A673 (cell line): ENCODE measurements at regions of chr7 and their contacts with region 1.

Region 1: DNA sequence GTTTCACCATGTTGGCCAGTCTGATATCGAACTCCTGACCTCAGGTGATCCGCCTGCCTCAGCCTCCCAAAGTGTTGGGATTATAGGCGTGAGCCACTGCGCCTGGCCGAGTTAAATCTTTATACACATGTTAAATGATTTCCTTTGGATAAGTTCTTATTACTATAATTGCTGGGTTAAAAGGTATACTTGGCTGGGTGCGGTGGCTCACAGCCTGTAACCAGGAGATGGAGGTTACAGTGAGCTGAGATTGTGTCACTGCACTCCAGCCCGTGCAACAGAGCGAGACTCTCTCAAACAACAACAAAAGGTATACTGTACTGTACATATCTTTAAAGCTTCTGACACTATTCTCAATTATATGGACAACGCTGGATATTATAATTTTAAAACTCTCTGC is 53.2 kb upstream of the CDK13 start:
- DNase-seq: no peak
- H3K4me3 ChIP-seq: no peak overlapping the region
- H3K27ac ChIP-seq: no peak overlapping the region
- H3K4me1 ChIP-seq: peaks cover 7% of the 10 kb centered on the region
- H3K27me3 ChIP-seq: no peaks in the 10 kb centered on the region
- CTCF ChIP-seq: no peak

Region 2: GRCh38 chr7:39979406-39980073 is 82.7 kb after region 1 on chr7:
- CTCF ChIA-PET with region 1: no interaction called
- POLR2A ChIA-PET with region 1: no interaction called
- intact Hi-C with region 1: no loop called
- DNase-seq: no peak
- H3K4me3 ChIP-seq: no peak overlapping the region
- H3K27ac ChIP-seq: no peak overlapping the region
- H3K4me1 ChIP-seq: peaks cover 5% of the 10 kb centered on the region
- H3K27me3 ChIP-seq: no peaks in the 10 kb centered on the region
- CTCF ChIP-seq: no peak

Region 3: DNA sequence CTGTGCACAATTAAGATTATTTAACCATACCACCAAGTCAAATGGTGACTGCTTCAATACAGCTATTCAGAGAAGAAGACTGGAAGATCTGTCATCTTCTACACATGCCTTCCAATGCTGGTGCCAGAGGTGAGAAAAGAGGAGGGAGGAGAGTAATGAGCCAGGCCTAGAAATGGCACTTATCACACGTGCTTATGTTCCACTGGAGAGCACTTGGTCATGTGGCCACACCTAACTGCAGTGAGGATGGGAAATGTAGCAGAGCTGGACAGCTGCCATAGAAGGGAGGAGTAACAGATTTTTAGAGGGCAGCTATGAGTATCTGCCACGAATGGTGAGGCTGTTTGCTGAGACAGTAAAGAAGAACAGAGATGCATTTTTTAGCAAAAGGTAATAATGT is 160.5 kb after region 1 on chr7:
- CTCF ChIA-PET with region 1: interaction called, 12 read pairs
- POLR2A ChIA-PET with region 1: no interaction called
- intact Hi-C with region 1: loop called (anchors 1 kb)
- DNase-seq: peak; percentile 27
- H3K4me3 ChIP-seq: no peak overlapping the region
- H3K27ac ChIP-seq: no peak overlapping the region
- H3K4me1 ChIP-seq: peaks cover 8% of the 10 kb centered on the region
- H3K27me3 ChIP-seq: no peaks in the 10 kb centered on the region
- CTCF ChIP-seq: no peak

Region 4: GRCh38 chr7:40134428-40135316 is 237.8 kb after region 1 on chr7 and contains the starts of genes MPLKIP and SUGCT:
- CTCF ChIA-PET with region 1: no interaction called
- POLR2A ChIA-PET with region 1: no interaction called
- intact Hi-C with region 1: loop called (anchors 2 kb)
- DNase-seq: peak; percentile 90
- H3K4me3 ChIP-seq: peak within 1 kb of the TSS; percentile 95
- H3K27ac ChIP-seq: peak within 1 kb of the TSS; percentile 95
- H3K4me1 ChIP-seq: peaks cover 9% of the 10 kb centered on the region
- H3K27me3 ChIP-seq: no peaks in the 10 kb centered on the region
- CTCF ChIP-seq: peak; percentile 79
- total RNA-seq, gene MPLKIP: 43.8 and 49.0 TPM in 2 replicates
- total RNA-seq, gene SUGCT: 1.5 and 2.5 TPM in 2 replicates